ENCODE measurements at regions of chr1 and their contacts with region 1.

Region 1: DNA sequence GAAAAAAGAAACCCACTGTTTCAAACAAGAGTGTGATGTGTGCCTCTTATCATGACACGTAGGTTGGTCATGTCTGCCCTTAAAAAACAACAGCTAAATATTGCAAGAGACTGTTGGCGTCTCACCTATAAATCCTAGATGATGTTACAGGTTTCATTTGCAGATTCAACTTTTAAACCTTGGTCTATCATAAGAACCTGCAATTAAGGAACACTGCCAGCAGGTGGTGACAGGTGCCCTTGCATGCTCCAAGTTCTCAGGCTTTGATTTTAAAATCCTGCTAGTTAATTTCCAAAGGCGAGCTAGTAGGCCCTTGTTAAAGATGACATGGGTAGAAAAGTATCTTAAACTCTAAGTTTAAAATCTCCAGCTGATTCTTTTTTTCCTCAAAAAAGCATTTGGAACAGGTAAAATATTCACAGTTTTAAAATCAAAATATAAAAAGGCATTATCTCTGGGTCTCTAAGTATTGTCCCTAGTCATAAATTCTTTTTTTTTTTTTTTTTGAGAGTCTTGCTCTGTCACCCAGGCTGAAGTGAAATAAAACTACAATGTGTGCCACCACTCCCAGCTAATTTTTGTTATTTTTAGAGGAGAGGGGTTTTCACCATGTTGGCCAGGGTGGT is 39.1 kb downstream of the CLSTN1 start:
- DNase-seq: peak in 2 of 5 donors; percentile 21 to 33
- H3K4me3 ChIP-seq: no peak overlapping the region
- H3K27ac ChIP-seq: no peak overlapping the region
- H3K4me1 ChIP-seq: no peaks in the 10 kb centered on the region
- H3K27me3 ChIP-seq: no peaks in the 10 kb centered on the region
- CTCF ChIP-seq: peak in 2 of 3 donors; percentile 39 to 40
- EP300 ChIP-seq: no peak
- POLR2A ChIP-seq: no peak

Region 2: GRCh38 chr1:9861360-9861759 is 76.7 kb after region 1 on chr1:
- intact Hi-C with region 1: loop called in 3 of 4 experiments (anchors 2 to 10 kb)
- DNase-seq: no peak
- H3K4me3 ChIP-seq: no peak overlapping the region
- H3K27ac ChIP-seq: no peak overlapping the region
- H3K4me1 ChIP-seq: peaks cover 9% of the 10 kb centered on the region
- H3K27me3 ChIP-seq: no peaks in the 10 kb centered on the region
- CTCF ChIP-seq: no peak
- EP300 ChIP-seq: no peak
- POLR2A ChIP-seq: no peak

Region 3: DNA sequence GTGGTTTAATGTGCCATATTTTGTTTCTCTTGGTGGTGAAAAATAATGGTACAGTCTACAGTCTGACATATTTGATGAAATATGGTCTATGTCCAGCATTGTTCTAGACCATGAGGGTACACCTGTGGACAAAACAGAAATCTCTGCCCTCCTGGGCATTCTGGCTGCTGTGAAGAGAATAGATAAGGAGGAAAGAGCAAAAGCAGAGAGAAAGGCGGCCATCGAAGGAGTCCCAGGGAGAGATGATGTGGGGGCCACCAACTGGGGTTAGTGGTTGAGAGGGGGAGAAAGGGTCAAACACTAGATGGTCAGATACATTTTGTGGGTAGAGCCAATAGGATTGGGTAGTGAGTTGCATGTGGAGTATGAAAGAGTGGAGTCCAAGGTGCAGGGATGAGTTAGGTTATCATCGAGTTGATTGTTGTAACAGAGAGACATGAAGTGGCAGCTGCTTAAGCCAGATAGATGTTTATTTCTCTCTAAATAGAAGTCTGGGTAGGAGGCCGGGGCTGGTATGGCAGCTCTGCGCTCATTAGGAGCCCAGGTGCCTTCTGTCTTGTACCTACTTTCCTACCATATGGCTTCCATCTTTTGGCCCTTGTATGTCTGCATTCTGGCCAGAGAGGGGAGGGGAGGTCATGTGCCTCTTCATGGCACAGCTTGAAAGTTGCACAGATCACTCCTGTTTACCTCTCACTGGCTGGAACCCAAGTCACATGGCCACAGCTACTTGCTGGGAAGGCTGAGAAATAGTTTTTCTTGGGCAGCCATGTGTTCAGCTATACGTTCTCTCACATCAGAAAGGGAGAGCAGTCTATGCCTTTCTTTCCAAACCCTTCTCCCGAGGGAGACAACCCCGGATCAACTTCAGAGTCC is 261.1 kb after region 1 on chr1:
- intact Hi-C with region 1: no loop called
- DNase-seq: peak in 1 of 5 donors; percentile 44
- H3K4me3 ChIP-seq: no peak overlapping the region
- H3K27ac ChIP-seq: peak overlapping the region; percentile 45 to 50
- H3K4me1 ChIP-seq: peaks cover 24% of the 10 kb centered on the region
- H3K27me3 ChIP-seq: no peaks in the 10 kb centered on the region
- CTCF ChIP-seq: no peak
- EP300 ChIP-seq: no peak
- POLR2A ChIP-seq: no peak

Measured in ovary (tissue), 10 donors.